Activated T-helper 1 cell treated with anti-CD3 and anti-CD28 coated beads, Interleukin-12 subunit alpha, Interleukin-12 subunit beta, Interleukin-2, Interleukin-4 antibody, amounts not matched to agents 30 ng/mL and 10 ng/mL and 1 ng/mL, durations not matched to agents 14 hours and 24 hours and 36 hours (primary cell): ENCODE measurements at regions of chr5 and their contacts with region 1.

Region 1: GRCh38 chr5:81851481-81852178 is 100.7 kb upstream of the SSBP2 start:
- DNase-seq: peak; percentile 87
- H3K4me3 Mint-ChIP-seq: peak overlapping the region; percentile 94
- H3K27ac Mint-ChIP-seq: peak overlapping the region; percentile 96
- H3K4me1 Mint-ChIP-seq: peaks cover 41% of the 10 kb centered on the region
- H3K27me3 Mint-ChIP-seq: peaks cover 1% of the 10 kb centered on the region

Region 2: GRCh38 chr5:81506900-81507588 is 344.6 kb before region 1 on chr5:
- intact Hi-C with region 1: loop called (anchors 1 kb)
- DNase-seq: peak; percentile 11
- H3K4me3 Mint-ChIP-seq: no peak overlapping the region
- H3K27ac Mint-ChIP-seq: no peak overlapping the region
- H3K4me1 Mint-ChIP-seq: no peaks in the 10 kb centered on the region
- H3K27me3 Mint-ChIP-seq: no peaks in the 10 kb centered on the region

Region 3: DNA sequence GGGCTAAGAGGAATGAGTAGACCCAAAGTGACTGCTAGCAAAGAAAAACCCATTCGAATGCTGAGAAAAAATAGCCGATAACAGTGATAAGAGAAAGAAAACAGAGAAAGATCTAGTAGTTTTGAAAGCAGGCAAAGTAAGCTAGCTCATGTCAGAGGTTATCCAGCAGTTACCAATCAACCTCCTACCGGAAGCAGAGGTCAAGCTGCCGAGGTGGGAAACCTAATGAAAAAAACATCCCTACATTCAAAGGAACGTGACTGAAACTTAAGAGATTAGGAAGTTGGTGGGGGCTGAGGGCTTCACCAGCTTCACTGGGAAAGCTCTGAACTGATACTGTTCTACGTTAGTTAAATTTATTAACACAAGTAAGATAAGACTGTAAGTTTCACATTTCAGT is 133.3 kb before region 1 on chr5:
- intact Hi-C with region 1: no loop called
- DNase-seq: no peak
- H3K4me3 Mint-ChIP-seq: no peak overlapping the region
- H3K27ac Mint-ChIP-seq: no peak overlapping the region
- H3K4me1 Mint-ChIP-seq: peaks cover 26% of the 10 kb centered on the region
- H3K27me3 Mint-ChIP-seq: no peaks in the 10 kb centered on the region

Region 4: GRCh38 chr5:81751009-81751835 is 100.4 kb before region 1 on chr5 and contains the start of gene SSBP2:
- intact Hi-C with region 1: loop called (anchors 1 kb)
- DNase-seq: peak; percentile 98
- H3K4me3 Mint-ChIP-seq: peak within 1 kb of the TSS; percentile 91
- H3K27ac Mint-ChIP-seq: peak within 1 kb of the TSS; percentile 92
- H3K4me1 Mint-ChIP-seq: peaks cover 27% of the 10 kb centered on the region
- H3K27me3 Mint-ChIP-seq: peaks cover 9% of the 10 kb centered on the region
- total RNA-seq, gene SSBP2: 8.4 and 12.7 TPM in 2 replicates

Region 5: GRCh38 chr5:82165740-82166530 is 314.3 kb after region 1 on chr5:
- intact Hi-C with region 1: loop called (anchors 1 kb)
- DNase-seq: no peak
- H3K4me3 Mint-ChIP-seq: no peak overlapping the region
- H3K27ac Mint-ChIP-seq: no peak overlapping the region
- H3K4me1 Mint-ChIP-seq: no peaks in the 10 kb centered on the region
- H3K27me3 Mint-ChIP-seq: no peaks in the 10 kb centered on the region

Region 6: DNA sequence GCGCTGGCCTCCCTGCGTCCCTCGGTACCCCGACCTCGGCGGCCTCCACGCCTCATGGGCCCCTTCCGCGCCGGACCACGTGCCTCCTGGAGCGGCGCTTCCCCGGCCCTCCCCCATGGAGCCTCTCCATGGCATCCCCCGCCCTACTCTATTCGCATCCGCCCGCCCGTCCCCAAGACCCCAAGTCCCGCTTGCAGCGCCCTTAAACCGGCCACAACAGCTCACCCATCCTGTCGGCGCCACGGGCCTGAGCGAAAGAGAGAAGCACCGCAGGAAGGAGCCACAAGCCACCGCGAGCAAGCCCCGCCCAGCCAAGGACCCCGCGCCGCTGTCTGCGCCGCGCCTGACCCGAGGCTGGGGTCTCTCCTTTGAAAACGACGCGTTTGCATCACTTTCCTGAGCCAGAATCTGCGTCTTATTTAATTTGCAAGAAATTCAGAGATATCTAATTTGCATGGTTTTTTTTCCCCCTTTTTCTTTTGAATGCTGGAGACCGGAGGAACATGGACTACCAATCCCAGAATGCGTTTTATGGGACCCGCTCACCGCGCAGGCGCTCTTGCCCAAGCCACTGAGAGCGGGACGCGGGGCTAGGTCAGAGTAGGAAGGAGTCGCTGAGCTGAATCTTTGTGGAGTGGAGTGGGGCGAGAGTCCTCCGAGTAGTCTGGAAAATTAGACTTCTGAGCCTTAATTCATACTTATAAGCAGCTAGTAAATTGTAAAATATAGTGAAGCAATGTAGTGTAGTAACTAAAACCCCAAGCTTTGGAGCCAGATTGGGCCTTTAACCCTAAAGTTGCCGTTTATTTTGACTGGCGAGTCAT is 426.7 kb after region 1 on chr5 and contains the start of gene RPS23:
- intact Hi-C with region 1: loop called (anchors 1 kb)
- DNase-seq: peak; percentile 81
- H3K4me3 Mint-ChIP-seq: peak within 1 kb of the TSS; percentile 92
- H3K27ac Mint-ChIP-seq: peak within 1 kb of the TSS; percentile 96
- H3K4me1 Mint-ChIP-seq: peaks cover 34% of the 10 kb centered on the region
- H3K27me3 Mint-ChIP-seq: no peaks in the 10 kb centered on the region
- total RNA-seq, gene RPS23: 2,220 and 2,235 TPM in 2 replicates